ENCODE measurements at regions of chr6 and their contacts with region 1.

Region 1: DNA sequence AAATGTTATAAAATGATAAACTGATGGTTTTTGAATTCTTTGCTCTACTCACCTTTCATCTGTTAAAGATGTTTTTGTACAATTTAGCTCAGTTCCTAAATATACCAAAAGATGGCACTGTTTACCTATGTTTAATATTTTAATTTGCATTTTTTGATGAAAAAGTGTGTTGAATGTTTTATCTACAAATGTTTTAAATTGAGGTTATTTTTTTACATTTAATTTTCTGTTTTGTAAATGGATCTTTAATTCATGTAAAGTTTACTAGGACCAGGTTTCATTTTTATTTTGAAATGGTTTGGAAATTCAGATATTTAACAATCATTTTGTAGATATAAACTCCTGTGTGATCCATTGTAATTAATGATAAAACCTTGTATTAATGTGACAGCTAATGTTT is 30.0 kb downstream of the CDKAL1 start:
- DNase-seq: peak; percentile 21
- CTCF ChIP-seq: peak; percentile 23

Region 2: DNA sequence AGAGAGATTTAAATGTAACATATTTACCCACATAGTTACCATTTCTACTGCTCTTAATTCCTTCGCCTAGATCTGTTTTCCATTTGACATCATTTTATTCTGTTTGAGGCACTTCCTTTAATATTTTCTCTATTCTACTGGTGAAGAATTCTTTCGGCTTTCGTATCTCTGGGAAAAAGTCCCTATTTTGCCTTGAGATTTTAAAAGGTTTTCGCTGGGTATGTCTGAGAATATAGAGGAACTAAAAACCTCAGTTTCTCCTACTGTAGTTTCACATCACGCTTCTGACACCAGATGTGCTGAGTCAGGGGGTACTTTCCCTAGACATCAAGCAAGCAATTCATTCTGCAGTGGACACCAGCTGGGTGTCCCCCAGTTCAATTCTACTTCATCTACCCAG is 100.9 kb before region 1 on chr6:
- CTCF ChIA-PET with region 1: no interaction called
- POLR2A ChIA-PET with region 1: no interaction called
- DNase-seq: peak; percentile 27
- CTCF ChIP-seq: no peak

Region 3: GRCh38 chr6:20548264-20548663 is 16.0 kb before region 1 on chr6:
- CTCF ChIA-PET with region 1: interaction called, 12 read pairs
- POLR2A ChIA-PET with region 1: no interaction called
- DNase-seq: no peak
- CTCF ChIP-seq: no peak

Region 4: GRCh38 chr6:20605581-20605980 is 41.3 kb after region 1 on chr6:
- CTCF ChIA-PET with region 1: no interaction called
- POLR2A ChIA-PET with region 1: no interaction called
- DNase-seq: no peak
- CTCF ChIP-seq: no peak

Region 5: DNA sequence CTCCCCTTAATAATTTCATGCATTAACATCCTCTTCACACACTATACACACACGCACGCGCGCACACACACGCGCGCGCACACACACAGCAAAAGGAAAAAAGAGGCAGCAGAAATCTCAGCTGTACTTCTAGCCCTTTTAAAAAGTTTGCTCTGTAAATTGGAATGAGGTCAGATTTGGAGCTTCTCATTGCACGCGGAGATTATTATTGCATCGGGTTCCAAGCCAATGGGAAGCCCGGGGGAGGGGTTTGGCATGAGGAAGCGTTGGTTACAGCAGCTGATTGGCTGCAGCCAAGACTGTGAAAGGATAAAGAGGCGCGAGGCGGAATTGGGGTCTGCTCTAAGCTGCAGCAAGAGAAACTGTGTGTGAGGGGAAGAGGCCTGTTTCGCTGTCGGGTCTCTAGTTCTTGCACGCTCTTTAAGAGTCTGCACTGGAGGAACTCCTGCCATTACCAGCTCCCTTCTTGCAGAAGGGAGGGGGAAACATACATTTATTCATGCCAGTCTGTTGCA is 1029.2 kb after region 1 on chr6 and contains the start of gene SOX4:
- CTCF ChIA-PET with region 1: interaction called, 119 read pairs
- POLR2A ChIA-PET with region 1: interaction called, 8 read pairs
- DNase-seq: peak; percentile 85
- CTCF ChIP-seq: no peak

Measured in GM10248 (cell line).